ENCODE measurements at regions of chr5 and their contacts with region 1.

Region 1: GRCh38 chr5:96256778-96257470 is 176.1 kb downstream of the PCSK1 start:
- DNase-seq: peak; percentile 96
- ATAC-seq: peak; percentile 22
- H3K4me3 ChIP-seq: no peak overlapping the region
- H3K27ac ChIP-seq: peak overlapping the region; percentile 8; the same call in 1 of the 2 replicates
- H3K4me1 ChIP-seq: peaks cover 23% of the 10 kb centered on the region
- H3K27me3 ChIP-seq: no peaks in the 10 kb centered on the region
- CTCF ChIP-seq: peak; percentile 18; the same call in 1 of the 2 replicates
- POLR2A ChIP-seq: no peak
- RAD21 ChIP-seq: no peak

Region 2: GRCh38 chr5:95760273-95761191 is 496.4 kb before region 1 on chr5:
- CTCF ChIA-PET with region 1: no interaction called
- POLR2A ChIA-PET with region 1: no interaction called
- dilution Hi-C with region 1: no loop called
- in situ Hi-C with region 1: no loop called
- intact Hi-C with region 1: no loop called
- DNase-seq: peak; percentile 99
- ATAC-seq: peak; percentile 75
- H3K4me3 ChIP-seq: no peak overlapping the region; the same call in 1 of the 2 replicates
- H3K27ac ChIP-seq: peak overlapping the region; percentile 16; the same call in 1 of the 2 replicates
- H3K4me1 ChIP-seq: peaks cover 28% of the 10 kb centered on the region
- H3K27me3 ChIP-seq: no peaks in the 10 kb centered on the region
- CTCF ChIP-seq: no peak
- POLR2A ChIP-seq: no peak
- RAD21 ChIP-seq: no peak

Region 3: GRCh38 chr5:96177303-96177869 is 79.5 kb before region 1 on chr5:
- CTCF ChIA-PET with region 1: no interaction called
- POLR2A ChIA-PET with region 1: no interaction called
- dilution Hi-C with region 1: no loop called
- in situ Hi-C with region 1: no loop called
- intact Hi-C with region 1: loop called (anchors 10 kb)
- DNase-seq: peak; percentile 91
- ATAC-seq: peak; percentile 55
- H3K4me3 ChIP-seq: no peak overlapping the region
- H3K27ac ChIP-seq: peak overlapping the region; percentile 47; the same call in 1 of the 2 replicates
- H3K4me1 ChIP-seq: peaks cover 19% of the 10 kb centered on the region
- H3K27me3 ChIP-seq: no peaks in the 10 kb centered on the region
- CTCF ChIP-seq: no peak
- POLR2A ChIP-seq: no peak
- RAD21 ChIP-seq: no peak; the same call in 1 of the 2 replicates

Region 4: GRCh38 chr5:96209829-96210228 is 47.1 kb before region 1 on chr5:
- CTCF ChIA-PET with region 1: interaction called, 3 read pairs
- POLR2A ChIA-PET with region 1: no interaction called
- dilution Hi-C with region 1: no loop called
- in situ Hi-C with region 1: no loop called
- intact Hi-C with region 1: loop called (anchors 5 kb)
- DNase-seq: peak; percentile 90
- ATAC-seq: peak; percentile 65
- H3K4me3 ChIP-seq: no peak overlapping the region
- H3K27ac ChIP-seq: no peak overlapping the region
- H3K4me1 ChIP-seq: peaks cover 2% of the 10 kb centered on the region
- H3K27me3 ChIP-seq: no peaks in the 10 kb centered on the region
- CTCF ChIP-seq: no peak
- POLR2A ChIP-seq: no peak
- RAD21 ChIP-seq: no peak

Region 5: DNA sequence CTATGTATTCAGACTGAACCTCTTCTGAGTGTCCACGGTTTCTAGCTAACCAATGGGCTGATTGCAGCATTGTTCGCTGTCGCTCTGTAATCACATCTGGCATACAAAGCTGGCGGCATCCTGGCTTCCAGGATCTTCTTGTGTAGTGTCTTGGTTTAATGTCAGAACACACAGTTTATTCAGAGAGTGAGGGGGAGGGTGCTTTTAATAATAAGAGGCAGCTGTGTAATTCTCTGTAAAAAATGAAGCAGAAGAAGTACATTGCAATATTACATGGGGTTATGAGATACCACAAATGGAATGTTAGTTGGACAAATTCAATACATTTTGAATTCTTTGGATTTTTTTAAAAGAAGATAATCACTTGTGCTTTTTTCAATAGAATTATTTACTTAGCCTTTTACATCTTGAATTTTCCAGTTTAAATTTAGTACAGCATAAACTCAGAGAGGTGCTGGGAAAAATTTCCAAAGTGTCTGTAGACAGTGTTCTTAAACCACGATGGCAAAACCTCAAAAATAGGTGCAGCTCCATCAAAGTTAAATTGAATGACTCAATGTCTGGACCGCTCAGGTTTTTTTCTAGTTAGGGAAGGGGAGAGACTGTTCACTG is 29.9 kb before region 1 on chr5:
- CTCF ChIA-PET with region 1: no interaction called
- POLR2A ChIA-PET with region 1: no interaction called
- dilution Hi-C with region 1: no loop called
- in situ Hi-C with region 1: no loop called
- intact Hi-C with region 1: loop called (anchors 2 kb)
- DNase-seq: peak; percentile 97
- ATAC-seq: peak; percentile 97
- H3K4me3 ChIP-seq: no peak overlapping the region
- H3K27ac ChIP-seq: peak overlapping the region; percentile 100
- H3K4me1 ChIP-seq: peaks cover 9% of the 10 kb centered on the region
- H3K27me3 ChIP-seq: no peaks in the 10 kb centered on the region
- CTCF ChIP-seq: no peak
- POLR2A ChIP-seq: no peak
- RAD21 ChIP-seq: peak; percentile 8; the same call in 1 of the 2 replicates

Region 6: DNA sequence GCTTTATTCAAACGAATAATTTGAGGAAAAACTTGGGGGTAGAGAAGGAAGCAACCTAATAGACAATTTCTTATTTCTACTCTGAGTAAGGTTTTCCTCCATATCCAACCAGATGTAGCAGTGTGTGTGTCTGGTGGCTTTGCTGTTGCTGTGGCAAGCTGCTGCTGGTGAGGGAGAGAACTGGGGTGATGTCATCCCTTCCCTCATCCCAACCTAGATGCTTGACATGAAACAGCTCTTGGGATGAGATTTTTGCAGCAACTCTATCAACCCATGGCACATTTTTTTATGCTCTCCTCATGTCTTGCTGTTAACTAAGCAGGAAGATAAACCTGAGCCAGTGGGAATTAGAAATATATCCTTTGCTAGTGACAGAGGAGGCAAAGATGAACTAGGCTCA is 40.4 kb after region 1 on chr5:
- CTCF ChIA-PET with region 1: no interaction called
- POLR2A ChIA-PET with region 1: no interaction called
- dilution Hi-C with region 1: no loop called
- in situ Hi-C with region 1: no loop called
- intact Hi-C with region 1: loop called (anchors 1 kb)
- DNase-seq: peak; percentile 98
- ATAC-seq: peak; percentile 64
- H3K4me3 ChIP-seq: no peak overlapping the region
- H3K27ac ChIP-seq: peak overlapping the region; percentile 53; the same call in 1 of the 2 replicates
- H3K4me1 ChIP-seq: peaks cover 8% of the 10 kb centered on the region
- H3K27me3 ChIP-seq: no peaks in the 10 kb centered on the region
- CTCF ChIP-seq: no peak
- POLR2A ChIP-seq: peak; percentile 63; the same call in 1 of the 2 replicates
- RAD21 ChIP-seq: peak; percentile 36; the same call in 1 of the 2 replicates

Region 7: DNA sequence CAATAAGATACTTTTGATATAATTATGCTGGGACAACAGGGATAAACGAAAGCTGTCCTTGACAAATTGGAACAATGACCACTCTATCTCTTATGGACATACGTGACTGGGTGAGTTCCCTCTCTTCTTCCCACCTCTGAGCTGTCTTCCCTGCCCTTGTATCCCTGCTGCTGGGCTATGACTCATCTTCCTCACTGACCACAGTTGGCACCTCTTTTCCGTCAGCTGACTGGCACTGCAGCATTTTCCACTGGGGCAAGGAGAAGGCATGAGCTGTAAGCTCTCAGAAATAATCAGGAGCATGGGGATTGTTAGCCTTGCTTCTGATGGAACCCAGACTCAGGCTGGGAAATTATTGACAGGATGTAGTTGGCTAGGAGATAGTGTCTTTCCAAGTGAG is 127.4 kb after region 1 on chr5:
- CTCF ChIA-PET with region 1: no interaction called
- POLR2A ChIA-PET with region 1: no interaction called
- dilution Hi-C with region 1: no loop called
- in situ Hi-C with region 1: no loop called
- intact Hi-C with region 1: no loop called
- DNase-seq: peak; percentile 67
- ATAC-seq: peak; percentile 70
- H3K4me3 ChIP-seq: no peak overlapping the region
- H3K27ac ChIP-seq: no peak overlapping the region
- H3K4me1 ChIP-seq: peaks cover 6% of the 10 kb centered on the region; the same call in 1 of the 2 replicates
- H3K27me3 ChIP-seq: peaks cover 2% of the 10 kb centered on the region; the same call in 1 of the 2 replicates
- CTCF ChIP-seq: no peak
- POLR2A ChIP-seq: no peak
- RAD21 ChIP-seq: no peak

Measured in IMR-90 (cell line).